ENCODE measurements at regions of chr1 and their contacts with region 1.

Region 1: GRCh38 chr1:21149862-21150432 is 26.8 kb downstream of the EIF4G3 start:
- DNase-seq: no peak
- H3K4me3 ChIP-seq: no peak overlapping the region
- H3K27ac ChIP-seq: peak overlapping the region; percentile 46 to 67 (median 59)
- H3K4me1 ChIP-seq: peaks cover 30 to 58% (median 55%) of the 10 kb centered on the region in 4 donors
- H3K27me3 ChIP-seq: no peaks in the 10 kb centered on the region
- CTCF ChIP-seq: no peak
- EP300 ChIP-seq: no peak
- POLR2A ChIP-seq: no peak

Region 2: DNA sequence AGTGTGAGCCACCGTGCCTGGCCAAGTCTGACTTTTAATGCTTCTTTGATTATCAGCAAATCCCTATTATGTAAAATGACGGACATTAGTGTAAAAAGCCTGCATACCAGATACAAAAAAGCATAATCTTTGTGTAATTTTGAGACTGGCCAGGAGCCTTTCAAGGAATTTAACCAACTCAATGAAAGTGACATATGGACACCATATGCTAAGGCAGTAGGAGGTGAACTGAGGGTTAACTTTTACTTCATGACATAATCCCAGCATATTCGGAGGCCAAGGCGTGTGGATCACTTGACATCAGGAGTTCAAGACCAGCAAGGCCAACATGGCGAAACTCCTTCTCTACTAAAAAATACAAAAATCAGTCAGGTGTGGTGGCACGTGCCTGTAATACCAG is 67.9 kb before region 1 on chr1:
- intact Hi-C with region 1: loop called (anchors 10 kb)
- DNase-seq: no peak
- H3K4me3 ChIP-seq: no peak overlapping the region
- H3K27ac ChIP-seq: no peak overlapping the region
- H3K4me1 ChIP-seq: peaks cover 0 to 10% (median 4%) of the 10 kb centered on the region in 4 donors
- H3K27me3 ChIP-seq: no peaks in the 10 kb centered on the region
- CTCF ChIP-seq: no peak
- EP300 ChIP-seq: no peak
- POLR2A ChIP-seq: no peak

Region 3: DNA sequence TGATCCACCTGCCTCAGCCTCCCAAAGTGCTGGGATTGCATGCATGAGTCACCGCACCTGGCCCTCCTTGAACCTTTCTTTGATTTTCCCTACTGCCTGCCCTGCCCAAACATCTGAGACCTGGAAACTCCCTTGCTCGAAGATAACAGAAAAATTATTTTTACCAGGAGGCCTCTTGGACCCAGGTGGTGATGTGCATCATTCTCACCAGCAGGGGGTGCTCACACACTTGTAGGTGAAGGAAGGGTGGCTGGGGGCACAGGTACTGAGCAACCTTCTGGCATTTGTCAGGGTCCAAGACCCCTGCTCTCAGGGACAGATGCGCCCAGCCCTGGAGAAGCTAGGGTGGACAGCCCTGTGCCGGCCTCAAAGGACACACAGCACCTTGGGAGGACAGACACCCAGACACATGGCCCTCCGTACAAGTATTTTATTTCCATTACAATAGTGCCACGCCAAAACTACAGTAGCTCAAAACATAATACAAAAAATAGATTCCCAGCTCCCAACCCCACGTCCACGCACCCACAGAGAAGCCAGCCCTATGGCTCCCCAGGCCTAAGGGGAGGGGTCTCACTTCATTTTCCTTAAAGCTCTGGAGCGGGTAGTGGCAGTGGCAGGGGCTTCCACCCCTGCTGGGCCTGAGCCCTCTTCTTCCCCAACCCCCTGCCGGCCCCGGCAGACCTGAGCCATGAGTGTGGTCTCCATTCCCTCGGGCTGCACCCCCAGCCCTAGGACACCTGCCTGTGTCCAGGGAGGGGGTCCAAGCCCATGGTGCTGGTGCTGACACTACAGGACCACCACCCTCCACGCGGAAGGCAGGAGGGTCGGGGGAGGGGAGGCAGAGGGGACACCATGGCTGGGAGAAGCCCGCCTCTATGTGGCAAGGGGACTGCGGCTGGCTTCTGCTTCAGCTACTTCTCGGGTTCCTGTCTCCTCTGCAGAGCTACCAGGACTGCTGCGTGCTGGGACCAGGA is 67.2 kb after region 1 on chr1:
- intact Hi-C with region 1: no loop called
- DNase-seq: no peak
- H3K4me3 ChIP-seq: no peak overlapping the region
- H3K27ac ChIP-seq: no peak overlapping the region
- H3K4me1 ChIP-seq: peaks cover 0 to 16% (median 7%) of the 10 kb centered on the region in 4 donors
- H3K27me3 ChIP-seq: no peaks in the 10 kb centered on the region
- CTCF ChIP-seq: peak; percentile 55 to 79 (median 57)
- EP300 ChIP-seq: no peak
- POLR2A ChIP-seq: no peak